ENCODE measurements at regions of chr16 and their contacts with region 1.

Region 1: GRCh38 chr16:80816365-80816764 is 12.0 kb upstream of the CDYL2 start:
- DNase-seq: no peak
- ATAC-seq: no peak
- H3K4me3 Mint-ChIP-seq: no peak overlapping the region
- H3K27ac Mint-ChIP-seq: no peak overlapping the region
- H3K4me1 Mint-ChIP-seq: no peaks in the 10 kb centered on the region
- H3K27me3 Mint-ChIP-seq: peaks cover 13% of the 10 kb centered on the region

Region 2: DNA sequence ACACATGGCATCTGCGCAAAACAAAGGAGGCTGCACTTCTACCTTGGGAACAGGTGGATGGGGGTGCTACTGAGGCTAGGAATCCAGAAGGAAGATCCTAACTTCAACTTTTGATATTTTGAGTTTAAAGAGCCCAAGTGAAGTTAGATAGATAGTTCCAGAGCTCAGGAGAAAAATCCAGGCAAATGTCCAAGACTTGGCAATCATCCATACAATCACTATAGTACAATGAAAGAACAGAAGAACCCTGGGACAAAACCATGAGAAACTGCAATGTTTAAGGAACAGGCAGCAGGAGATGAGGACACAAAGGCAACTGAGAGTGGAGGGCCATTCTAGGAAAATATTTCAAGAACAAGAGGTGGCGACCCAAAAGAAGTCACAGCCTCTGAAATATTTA is 24.3 kb before region 1 on chr16:
- CTCF ChIA-PET with region 1: interaction called, 4 read pairs
- POLR2A ChIA-PET with region 1: no interaction called
- intact Hi-C with region 1: loop called in 1 of 2 experiments (anchors 2 kb)
- DNase-seq: no peak
- ATAC-seq: no peak
- H3K4me3 Mint-ChIP-seq: no peak overlapping the region
- H3K27ac Mint-ChIP-seq: no peak overlapping the region
- H3K4me1 Mint-ChIP-seq: peaks cover 10% of the 10 kb centered on the region
- H3K27me3 Mint-ChIP-seq: no peaks in the 10 kb centered on the region

Region 3: DNA sequence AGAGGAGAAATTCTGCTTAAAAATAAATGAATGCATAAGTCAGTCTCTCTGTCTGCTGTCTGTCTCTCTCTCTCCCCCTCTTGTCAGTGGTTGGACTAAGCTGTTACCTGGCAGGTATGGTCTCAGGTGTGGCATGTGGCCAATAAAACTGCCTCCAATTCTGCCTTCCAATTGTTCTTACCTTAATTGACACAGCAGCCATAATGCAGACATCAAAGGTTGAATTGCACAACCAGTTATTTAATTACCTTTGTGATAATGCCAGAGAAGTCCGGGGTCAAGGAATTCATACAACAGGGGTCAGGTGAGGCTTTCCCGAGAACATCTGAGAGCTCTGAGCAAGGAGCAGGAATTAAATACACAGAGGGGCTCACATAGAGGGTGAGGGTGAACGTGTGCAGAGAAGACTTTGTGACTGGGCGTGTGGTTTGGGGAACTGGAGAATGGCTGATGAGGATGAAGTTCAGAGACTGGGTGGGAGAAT is 66.8 kb after region 1 on chr16:
- CTCF ChIA-PET with region 1: no interaction called
- POLR2A ChIA-PET with region 1: no interaction called
- intact Hi-C with region 1: no loop called
- DNase-seq: no peak
- ATAC-seq: no peak
- H3K4me3 Mint-ChIP-seq: no peak overlapping the region
- H3K27ac Mint-ChIP-seq: no peak overlapping the region
- H3K4me1 Mint-ChIP-seq: no peaks in the 10 kb centered on the region
- H3K27me3 Mint-ChIP-seq: peaks cover 14% of the 10 kb centered on the region

Region 4: GRCh38 chr16:81127051-81127450 is 310.7 kb after region 1 on chr16:
- CTCF ChIA-PET with region 1: no interaction called
- POLR2A ChIA-PET with region 1: no interaction called
- intact Hi-C with region 1: no loop called
- DNase-seq: no peak
- ATAC-seq: no peak
- H3K4me3 Mint-ChIP-seq: no peak overlapping the region
- H3K27ac Mint-ChIP-seq: no peak overlapping the region
- H3K4me1 Mint-ChIP-seq: no peaks in the 10 kb centered on the region
- H3K27me3 Mint-ChIP-seq: no peaks in the 10 kb centered on the region